ENCODE measurements at regions of chr15 and their contacts with region 1.

Region 1: GRCh38 chr15:78108299-78109084 is 16.1 kb downstream of the SH2D7 start:
- DNase-seq: peak; percentile 82 to 93 (median 86)
- ATAC-seq: peak; percentile 65 to 90 (median 89)
- H3K4me3 ChIP-seq: no peak overlapping the region
- H3K27ac ChIP-seq: no peak overlapping the region
- H3K4me1 ChIP-seq: peaks cover 0 to 28% (median 0%) of the 10 kb centered on the region in 12 donors
- H3K27me3 ChIP-seq: no peaks in the 10 kb centered on the region
- CTCF ChIP-seq: peak; percentile 90 to 98 (median 93)
- POLR2A ChIP-seq: no peak

Region 2: GRCh38 chr15:77889009-77889806 is 219.3 kb before region 1 on chr15:
- intact Hi-C with region 1: no loop called
- DNase-seq: peak in 3 of 5 donors; percentile 24 to 47 (median 29)
- ATAC-seq: no peak
- H3K4me3 ChIP-seq: no peak overlapping the region
- H3K27ac ChIP-seq: peak overlapping the region in 9 of 12 donors; percentile 31 to 76 (median 62)
- H3K4me1 ChIP-seq: peaks cover 0 to 46% (median 2%) of the 10 kb centered on the region in 12 donors
- H3K27me3 ChIP-seq: no peaks in the 10 kb centered on the region
- CTCF ChIP-seq: no peak
- POLR2A ChIP-seq: no peak

Region 3: GRCh38 chr15:77966540-77967290 is 141.8 kb before region 1 on chr15:
- intact Hi-C with region 1: loop called in 9 of 10 experiments (anchors 1 to 2 kb)
- DNase-seq: peak in 1 of 5 donors; percentile 55
- ATAC-seq: peak; percentile 63 to 85 (median 73)
- H3K4me3 ChIP-seq: no peak overlapping the region
- H3K27ac ChIP-seq: no peak overlapping the region
- H3K4me1 ChIP-seq: peaks cover 0 to 4% (median 0%) of the 10 kb centered on the region in 12 donors
- H3K27me3 ChIP-seq: no peaks in the 10 kb centered on the region
- CTCF ChIP-seq: peak; percentile 74 to 91 (median 86)
- POLR2A ChIP-seq: no peak

Region 4: DNA sequence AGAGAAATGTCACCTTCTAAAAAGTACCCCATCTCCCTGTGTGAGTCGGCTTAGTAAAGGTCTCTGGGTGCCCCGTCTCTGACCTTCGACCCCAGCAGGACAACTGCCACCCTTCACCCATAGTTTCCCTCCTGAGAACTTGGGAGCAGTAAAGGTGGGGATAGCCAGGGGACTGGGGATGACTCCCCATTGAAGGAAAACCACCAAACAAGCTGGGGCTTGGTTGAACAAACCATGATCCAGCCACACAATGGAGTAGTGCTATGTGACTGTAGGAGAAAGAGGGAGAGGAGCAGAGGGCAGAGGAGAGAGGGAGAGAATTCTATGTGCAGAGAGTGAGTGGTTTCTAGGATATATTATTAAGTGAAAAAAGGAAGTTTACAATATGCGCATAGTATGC is 74.3 kb after region 1 on chr15:
- intact Hi-C with region 1: loop called in 1 of 10 experiments (anchors 5 kb)
- DNase-seq: no peak
- ATAC-seq: no peak
- H3K4me3 ChIP-seq: no peak overlapping the region
- H3K27ac ChIP-seq: no peak overlapping the region
- H3K4me1 ChIP-seq: no peaks in the 10 kb centered on the region
- H3K27me3 ChIP-seq: no peaks in the 10 kb centered on the region
- CTCF ChIP-seq: no peak
- POLR2A ChIP-seq: no peak

Region 5: GRCh38 chr15:78415286-78415685 is 306.8 kb after region 1 on chr15:
- intact Hi-C with region 1: loop called in 8 of 10 experiments (anchors 5 to 10 kb)
- DNase-seq: no peak
- ATAC-seq: no peak
- H3K4me3 ChIP-seq: no peak overlapping the region
- H3K27ac ChIP-seq: no peak overlapping the region
- H3K4me1 ChIP-seq: no peaks in the 10 kb centered on the region
- H3K27me3 ChIP-seq: peaks cover 0 to 5% (median 0%) of the 10 kb centered on the region in 9 donors
- CTCF ChIP-seq: peak in 3 of 12 donors; percentile 9 to 30 (median 17)
- POLR2A ChIP-seq: no peak